Dendritic cell treated with granulocyte-macrophage colony-stimulating factor and Interleukin-4, amounts not matched to agents 40 ng/mL and 50 ng/mL, for 4 days (primary cell): ENCODE measurements at regions of chr6 and their contacts with region 1.

Region 1: DNA sequence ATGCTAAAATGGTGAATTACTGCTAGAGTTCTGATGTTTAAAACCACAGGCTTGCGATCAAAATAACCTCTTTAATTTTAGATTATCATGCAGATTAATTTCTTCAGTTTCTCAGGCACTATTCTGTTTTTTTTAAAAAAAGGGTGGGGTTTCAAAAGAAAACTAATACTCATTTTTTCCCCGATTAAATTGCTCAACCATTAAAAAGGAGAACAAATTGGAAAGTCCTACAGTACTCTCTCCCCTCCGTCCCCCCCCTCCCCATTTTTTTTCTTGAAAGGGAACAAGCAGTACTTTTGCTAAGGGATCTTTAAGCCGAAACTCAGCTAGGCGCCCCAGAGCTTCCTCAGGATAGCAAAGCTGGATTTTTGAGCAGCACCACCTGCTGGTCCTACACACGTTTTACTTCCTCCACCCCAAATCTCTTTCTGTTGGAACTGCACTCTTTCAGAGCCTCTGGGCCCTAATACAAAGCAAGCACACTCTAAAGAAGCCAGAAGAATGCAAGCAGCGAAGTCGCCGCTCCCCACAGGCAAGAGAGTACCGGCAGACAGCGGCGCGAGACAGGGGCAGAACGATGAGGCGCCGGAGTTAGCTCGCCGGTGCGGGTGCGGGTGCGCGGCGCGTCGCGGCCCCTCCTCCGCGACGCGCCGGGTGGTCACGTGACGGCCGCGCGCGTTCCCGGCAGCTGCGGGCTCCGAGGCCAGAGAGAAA is at the start of gene RNF146:
- H3K4me3 Mint-ChIP-seq: peak within 1 kb of the TSS; percentile 100
- H3K27ac Mint-ChIP-seq: peak within 1 kb of the TSS; percentile 98
- H3K4me1 Mint-ChIP-seq: peaks cover 27% of the 10 kb centered on the region
- H3K27me3 Mint-ChIP-seq: no peaks in the 10 kb centered on the region

Region 2: DNA sequence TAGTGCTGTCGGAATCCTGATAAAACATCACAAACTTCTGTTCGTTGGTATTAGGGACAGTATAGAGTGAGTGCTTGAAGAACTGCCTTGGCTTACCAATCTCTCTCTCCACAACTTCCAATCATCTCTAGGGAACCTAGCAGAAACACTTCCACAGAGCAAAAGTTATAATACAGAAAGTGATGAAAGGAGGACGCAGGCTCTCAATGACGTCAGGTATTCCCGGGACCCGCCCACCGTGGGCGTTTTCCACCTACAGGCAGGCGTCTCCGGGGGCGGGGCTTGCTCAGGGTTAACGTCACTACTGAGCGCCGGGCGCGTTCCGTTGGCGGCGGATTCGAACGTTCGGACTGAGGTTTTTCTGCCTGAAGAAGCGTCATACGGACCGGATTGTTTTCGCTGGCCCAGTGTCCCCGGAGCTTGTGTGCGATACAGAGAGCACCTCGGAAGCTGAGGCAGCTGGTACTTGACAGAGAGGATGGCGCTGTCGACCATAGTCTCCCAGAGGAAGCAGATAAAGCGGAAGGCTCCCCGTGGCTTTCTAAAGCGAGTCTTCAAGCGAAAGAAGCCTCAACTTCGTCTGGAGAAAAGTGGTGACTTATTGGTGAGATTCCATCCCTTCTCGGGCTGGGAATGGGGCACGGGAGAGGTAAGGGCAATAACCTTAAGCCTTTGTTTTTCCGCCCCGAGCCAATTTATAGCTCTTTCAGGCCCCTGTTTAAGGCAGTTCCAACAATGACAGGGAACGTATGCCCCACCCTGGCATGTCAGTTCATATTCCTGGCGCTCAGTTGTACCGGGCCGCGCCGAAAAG is 926.3 kb before region 1 on chr6 and contains the start of gene CENPW:
- intact Hi-C with region 1: loop called (anchors 10 kb)
- H3K4me3 Mint-ChIP-seq: no peak within 1 kb of the TSS
- H3K27ac Mint-ChIP-seq: no peak within 1 kb of the TSS
- H3K4me1 Mint-ChIP-seq: peaks cover 29% of the 10 kb centered on the region
- H3K27me3 Mint-ChIP-seq: no peaks in the 10 kb centered on the region

Region 3: GRCh38 chr6:126963077-126963809 is 303.1 kb before region 1 on chr6:
- intact Hi-C with region 1: no loop called
- H3K4me3 Mint-ChIP-seq: no peak overlapping the region
- H3K27ac Mint-ChIP-seq: no peak overlapping the region
- H3K4me1 Mint-ChIP-seq: no peaks in the 10 kb centered on the region
- H3K27me3 Mint-ChIP-seq: no peaks in the 10 kb centered on the region

Region 4: DNA sequence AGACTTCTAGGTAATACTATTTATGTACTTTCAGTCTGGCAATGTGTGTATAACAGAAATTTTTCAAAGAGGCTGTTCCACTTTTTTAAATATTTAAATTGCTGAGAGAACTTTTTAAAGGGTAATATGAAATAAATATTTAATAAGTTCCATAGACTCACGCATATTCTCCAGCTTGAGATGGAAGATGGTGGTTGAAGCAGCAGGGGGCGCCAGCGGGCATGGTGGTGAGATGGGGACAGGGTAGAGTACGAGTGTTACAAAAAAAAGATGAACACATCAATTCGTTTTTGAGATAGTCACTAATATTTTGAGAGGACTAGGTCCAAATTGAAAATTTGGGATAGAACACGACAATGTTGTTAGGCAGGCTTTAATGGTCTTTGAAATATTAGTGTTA is 79.4 kb before region 1 on chr6:
- intact Hi-C with region 1: loop called (anchors 2 kb)
- H3K4me3 Mint-ChIP-seq: no peak overlapping the region
- H3K27ac Mint-ChIP-seq: no peak overlapping the region
- H3K4me1 Mint-ChIP-seq: peaks cover 12% of the 10 kb centered on the region
- H3K27me3 Mint-ChIP-seq: no peaks in the 10 kb centered on the region

Region 5: DNA sequence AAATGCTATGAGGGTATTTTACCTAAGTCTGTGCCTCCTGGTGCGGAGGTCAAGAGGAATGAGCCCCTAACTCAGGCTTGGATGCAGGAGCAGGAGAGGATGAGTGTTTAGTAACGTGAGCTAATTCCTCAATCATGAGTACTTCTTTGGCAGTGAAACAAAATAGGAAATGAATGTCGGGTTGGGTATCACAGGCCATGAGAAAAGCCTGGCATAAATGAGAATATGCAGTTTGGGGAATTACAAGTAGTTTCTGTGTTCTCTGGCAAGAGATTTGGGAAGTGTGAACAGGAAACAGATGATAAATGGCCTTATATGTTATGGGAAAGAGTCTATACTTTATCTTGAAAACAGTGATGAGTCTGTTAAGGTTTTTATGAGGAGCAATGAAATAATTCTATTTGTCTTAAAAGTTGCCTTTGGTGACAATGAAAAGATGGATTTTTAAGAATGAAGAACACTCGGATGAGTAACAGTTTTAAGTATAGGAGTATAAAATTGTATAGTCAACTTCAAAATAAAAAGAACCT is 58.7 kb before region 1 on chr6:
- intact Hi-C with region 1: loop called (anchors 5 kb)
- H3K4me3 Mint-ChIP-seq: no peak overlapping the region
- H3K27ac Mint-ChIP-seq: no peak overlapping the region
- H3K4me1 Mint-ChIP-seq: peaks cover 24% of the 10 kb centered on the region
- H3K27me3 Mint-ChIP-seq: no peaks in the 10 kb centered on the region

Region 6: DNA sequence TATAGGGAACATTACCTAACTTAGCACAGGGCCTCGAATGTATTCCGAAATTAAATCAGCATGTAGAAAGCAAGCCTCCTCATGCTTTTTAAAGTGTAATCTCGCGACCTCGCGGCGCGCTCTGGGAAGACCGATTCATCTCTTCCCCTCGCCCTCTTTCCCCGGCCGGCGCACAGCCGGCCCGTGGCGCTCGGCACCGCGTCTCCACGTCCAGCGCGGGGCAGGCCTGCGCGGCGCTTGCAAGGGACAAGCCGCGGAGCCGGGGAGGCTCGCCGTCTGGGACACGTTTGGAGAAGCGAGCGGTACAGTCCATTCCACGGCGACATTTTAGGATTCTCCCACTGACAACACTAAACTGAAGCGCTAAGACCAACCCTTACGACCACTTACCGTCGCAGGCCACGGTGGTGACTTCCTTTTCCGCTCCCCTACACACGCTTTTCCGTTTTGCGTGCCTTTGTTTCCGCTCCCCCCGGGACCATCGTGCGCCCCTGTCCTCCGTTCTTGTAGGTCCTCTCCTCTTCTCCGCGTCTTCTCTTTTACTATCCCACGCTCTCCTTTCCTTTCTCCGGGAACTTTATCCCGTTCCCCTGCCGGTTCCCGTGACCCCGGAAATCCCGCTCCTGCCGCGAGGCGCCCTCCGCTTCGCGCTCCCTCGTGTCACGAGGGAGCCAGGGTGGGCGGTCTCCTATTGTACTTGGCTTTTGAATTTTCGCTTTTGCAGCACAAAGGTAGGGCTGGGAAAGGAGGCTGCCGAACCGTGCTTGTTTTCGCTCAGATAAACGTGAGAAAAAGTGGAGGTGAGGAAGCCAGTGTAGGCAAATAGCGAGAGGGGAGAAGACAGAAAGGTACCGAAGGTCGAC is 76.8 kb after region 1 on chr6 and contains the start of gene ECHDC1:
- intact Hi-C with region 1: loop called (anchors 5 kb)
- H3K4me3 Mint-ChIP-seq: no peak within 1 kb of the TSS
- H3K27ac Mint-ChIP-seq: no peak within 1 kb of the TSS
- H3K4me1 Mint-ChIP-seq: peaks cover 17% of the 10 kb centered on the region
- H3K27me3 Mint-ChIP-seq: no peaks in the 10 kb centered on the region